Activated naive CD4-positive, alpha-beta T cell treated with anti-CD3 and anti-CD28 coated beads for 36 hours (primary cell): ENCODE measurements at regions of chr1 and their contacts with region 1.

Region 1: DNA sequence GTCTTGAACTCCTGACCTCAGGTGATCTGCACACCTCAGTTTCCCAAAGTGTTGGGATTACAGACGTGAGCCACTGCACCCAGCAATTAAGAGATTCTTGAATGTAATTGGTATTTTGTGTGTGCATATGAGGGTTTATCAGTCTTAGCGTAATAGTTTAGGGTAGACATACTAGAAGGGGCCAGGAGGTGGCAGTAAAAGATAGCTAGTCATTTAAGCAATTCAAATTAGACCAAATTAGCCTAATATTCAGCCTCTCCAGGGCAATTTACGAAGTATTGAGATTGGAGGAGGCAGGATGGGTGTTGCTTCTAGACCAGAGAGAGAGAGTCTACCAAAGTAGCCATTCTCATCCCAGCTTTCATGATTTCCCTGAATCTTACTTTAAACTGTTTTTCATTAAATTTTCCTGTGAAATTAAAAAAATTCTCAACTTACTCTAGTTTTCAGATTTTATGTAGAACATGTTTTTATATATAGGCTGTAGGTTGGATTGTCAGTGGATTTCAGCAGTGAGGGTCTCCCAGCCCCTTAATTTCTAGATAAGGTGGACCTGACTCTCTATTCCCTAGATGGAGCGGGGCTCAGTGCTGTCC is 119.7 kb downstream of the HHAT start:
- DNase-seq: peak; percentile 56
- H3K4me3 Mint-ChIP-seq: no peak overlapping the region
- H3K27ac Mint-ChIP-seq: no peak overlapping the region
- H3K4me1 Mint-ChIP-seq: peaks cover 31% of the 10 kb centered on the region
- H3K27me3 Mint-ChIP-seq: peaks cover 7% of the 10 kb centered on the region

Region 2: GRCh38 chr1:209674957-209675564 is 773.3 kb before region 1 on chr1 and contains the start of gene G0S2:
- CTCF ChIA-PET with region 1: no interaction called
- intact Hi-C with region 1: loop called (anchors 5 kb)
- DNase-seq: peak; percentile 68
- H3K4me3 Mint-ChIP-seq: peak within 1 kb of the TSS; percentile 87
- H3K27ac Mint-ChIP-seq: peak within 1 kb of the TSS; percentile 92
- H3K4me1 Mint-ChIP-seq: peaks cover 59% of the 10 kb centered on the region
- H3K27me3 Mint-ChIP-seq: peaks cover 19% of the 10 kb centered on the region
- total RNA-seq, gene G0S2: 138 to 139 TPM

Region 3: GRCh38 chr1:210328746-210329503 is 119.5 kb before region 1 on chr1 and contains the start of gene HHAT:
- CTCF ChIA-PET with region 1: interaction called, 10 read pairs
- intact Hi-C with region 1: loop called (anchors 1 kb)
- DNase-seq: peak; percentile 84
- H3K4me3 Mint-ChIP-seq: peak within 1 kb of the TSS; percentile 93
- H3K27ac Mint-ChIP-seq: peak within 1 kb of the TSS; percentile 95
- H3K4me1 Mint-ChIP-seq: peaks cover 41% of the 10 kb centered on the region
- H3K27me3 Mint-ChIP-seq: peaks cover 4% of the 10 kb centered on the region
- total RNA-seq, gene HHAT: 3.6 to 3.9 TPM

Region 4: GRCh38 chr1:210464519-210465039 is 16.2 kb after region 1 on chr1:
- CTCF ChIA-PET with region 1: interaction called, 21 read pairs
- intact Hi-C with region 1: loop called (anchors 1 kb)
- DNase-seq: peak; percentile 22
- H3K4me3 Mint-ChIP-seq: no peak overlapping the region
- H3K27ac Mint-ChIP-seq: peak overlapping the region; percentile 57
- H3K4me1 Mint-ChIP-seq: peaks cover 23% of the 10 kb centered on the region
- H3K27me3 Mint-ChIP-seq: peaks cover 2% of the 10 kb centered on the region

Region 5: GRCh38 chr1:210951279-210951678 is 502.9 kb after region 1 on chr1:
- CTCF ChIA-PET with region 1: interaction called, 5 read pairs
- intact Hi-C with region 1: loop called (anchors 1 kb)
- DNase-seq: no peak
- H3K4me3 Mint-ChIP-seq: no peak overlapping the region
- H3K27ac Mint-ChIP-seq: no peak overlapping the region
- H3K4me1 Mint-ChIP-seq: no peaks in the 10 kb centered on the region
- H3K27me3 Mint-ChIP-seq: peaks cover 8% of the 10 kb centered on the region

Region 6: GRCh38 chr1:211382714-211383480 is 934.5 kb after region 1 on chr1:
- CTCF ChIA-PET with region 1: no interaction called
- intact Hi-C with region 1: loop called (anchors 5 kb)
- DNase-seq: peak; percentile 80
- H3K4me3 Mint-ChIP-seq: peak overlapping the region; percentile 89
- H3K27ac Mint-ChIP-seq: peak overlapping the region; percentile 92
- H3K4me1 Mint-ChIP-seq: peaks cover 40% of the 10 kb centered on the region
- H3K27me3 Mint-ChIP-seq: no peaks in the 10 kb centered on the region